SK-MEL-5 (cell line): ENCODE measurements at regions of chr3 and their contacts with region 1.

Region 1: DNA sequence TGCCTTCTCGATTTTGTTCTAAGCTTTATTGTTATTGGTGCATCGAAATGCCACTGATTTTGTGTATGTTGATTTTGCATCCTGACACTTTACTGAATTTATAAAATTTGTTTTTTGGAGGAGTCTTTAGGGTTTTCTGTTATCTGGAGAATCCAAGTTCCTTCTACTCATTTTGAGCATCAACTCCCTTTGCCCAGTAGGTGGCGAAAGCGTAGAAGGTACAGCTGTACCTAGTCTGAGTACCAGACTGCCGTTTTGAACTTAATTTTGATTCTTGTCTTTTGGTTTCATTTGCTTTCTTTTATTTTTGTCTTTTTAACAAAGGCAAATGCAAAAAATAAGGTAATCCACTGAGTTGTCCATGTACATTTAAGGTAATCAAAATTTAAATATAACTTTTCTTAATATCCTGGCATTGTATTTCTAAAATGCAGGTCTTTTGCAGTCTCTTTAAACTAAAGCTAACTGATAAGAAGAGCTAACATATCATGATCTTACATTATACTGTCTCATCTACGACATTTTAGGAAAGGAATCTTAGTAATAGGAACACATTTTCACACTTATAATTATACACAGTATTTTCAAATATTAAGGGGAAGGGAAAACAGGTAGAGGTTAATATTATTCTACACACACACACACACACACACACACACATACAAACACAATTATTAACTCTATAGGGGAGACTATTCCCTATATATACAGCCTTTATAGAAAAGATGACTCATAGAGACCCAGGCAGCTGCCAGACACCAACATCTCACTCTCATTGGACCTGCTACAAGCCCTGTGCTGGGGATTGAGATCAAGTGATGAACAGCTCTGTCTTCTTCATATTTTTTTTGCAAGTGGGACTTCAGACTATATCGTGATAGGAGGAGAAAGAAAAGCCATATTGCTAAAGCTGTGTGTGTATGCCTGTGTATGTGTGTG is 71.7 kb downstream of the SYNPR start:
- DNase-seq: peak; percentile 75

Region 2: GRCh38 chr3:62665598-62666437 is 684.0 kb before region 1 on chr3:
- in situ Hi-C with region 1: no loop called
- DNase-seq: peak; percentile 85

Region 3: GRCh38 chr3:63492464-63492863 is 142.6 kb after region 1 on chr3:
- in situ Hi-C with region 1: no loop called
- DNase-seq: no peak

Region 4: GRCh38 chr3:63818281-63819150 is 468.7 kb after region 1 on chr3:
- in situ Hi-C with region 1: loop called (anchors 25 kb)
- DNase-seq: peak; percentile 65